ENCODE measurements at regions of chrX and their contacts with region 1.

Region 1: GRCh38 chrX:114959729-114960128 is 57.7 kb downstream of the IL13RA2 start:
- DNase-seq: no peak
- H3K4me3 ChIP-seq: no peak overlapping the region
- H3K27ac ChIP-seq: no peak overlapping the region
- H3K4me1 ChIP-seq: no peaks in the 10 kb centered on the region
- H3K27me3 ChIP-seq: no peaks in the 10 kb centered on the region
- CTCF ChIP-seq: no peak

Region 2: DNA sequence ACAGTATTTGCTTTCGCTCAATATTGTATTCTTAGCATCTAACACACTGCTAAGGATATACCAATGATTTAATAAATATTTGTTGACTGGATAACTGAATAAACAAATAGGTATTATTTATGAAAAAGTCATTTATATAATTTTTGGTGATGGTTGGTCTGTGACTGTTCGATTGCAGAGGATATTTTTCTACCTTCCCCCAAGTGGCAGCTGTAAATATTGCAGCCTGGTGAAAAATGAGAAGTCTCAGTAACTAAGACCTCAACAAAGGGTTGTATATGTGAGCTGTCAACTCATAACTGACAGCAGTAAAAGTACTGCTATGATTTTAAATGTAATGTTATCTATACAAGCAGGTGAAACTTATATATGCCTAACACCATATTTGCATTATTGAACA is 339.9 kb before region 1 on chrX:
- intact Hi-C with region 1: loop called (anchors 10 kb)
- DNase-seq: no peak
- H3K4me3 ChIP-seq: no peak overlapping the region
- H3K27ac ChIP-seq: no peak overlapping the region
- H3K4me1 ChIP-seq: no peaks in the 10 kb centered on the region
- H3K27me3 ChIP-seq: no peaks in the 10 kb centered on the region
- CTCF ChIP-seq: peak; percentile 36

Measured in colonic mucosa (tissue), 4 donors.